Activated CD4-positive, alpha-beta T cell treated with anti-CD3 and anti-CD28 coated beads for 36 hours (primary cell): ENCODE measurements at regions of chr17 and their contacts with region 1.

Region 1: DNA sequence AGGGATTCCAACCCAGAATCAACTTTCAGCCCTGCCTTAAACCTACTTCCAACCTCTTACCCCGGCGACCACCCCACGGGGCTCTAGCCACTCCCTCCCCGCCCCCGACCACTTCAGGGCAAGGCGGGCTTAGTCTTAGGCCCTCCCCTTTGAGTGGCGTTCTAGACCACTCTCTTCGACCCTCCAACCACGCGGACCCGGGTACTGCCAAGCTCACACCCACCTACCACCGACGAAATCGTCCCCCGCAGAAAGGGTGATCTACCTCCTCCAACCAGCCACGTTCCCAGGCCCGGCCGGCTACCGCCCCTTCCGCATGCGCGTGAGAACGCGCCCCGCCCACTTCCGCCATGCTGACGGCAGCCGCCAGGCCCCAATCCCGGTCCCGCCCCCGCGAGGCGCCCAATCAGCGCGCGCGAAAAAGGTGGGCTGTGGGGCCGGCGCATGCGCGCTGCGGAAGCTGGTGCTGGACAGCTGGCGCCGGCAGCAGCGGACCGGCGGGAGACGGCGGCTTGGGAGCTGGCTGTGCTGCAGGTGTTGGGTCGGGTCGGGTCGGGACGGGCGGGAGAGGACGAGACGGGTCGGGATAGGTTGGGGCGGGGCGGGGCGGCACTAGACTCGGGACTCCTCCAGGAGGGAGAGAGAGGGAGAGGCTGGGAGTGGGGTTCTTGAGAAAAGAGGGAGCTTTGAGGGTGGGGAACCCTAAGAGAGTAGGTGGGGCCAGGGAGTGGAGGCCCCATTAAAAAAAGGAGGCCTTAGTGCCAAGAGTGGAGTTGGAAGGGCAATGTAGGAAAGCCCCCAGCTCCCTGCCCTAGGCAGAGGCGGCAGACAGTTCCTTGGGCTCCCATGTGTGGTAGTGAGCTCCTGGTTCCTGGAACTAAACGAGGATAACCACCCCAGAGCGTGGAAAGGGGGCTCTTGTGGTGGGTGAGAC is at the start of gene NAT9:
- DNase-seq: peak; percentile 100
- ATAC-seq: peak; percentile 76
- H3K4me3 Mint-ChIP-seq: peak within 1 kb of the TSS; percentile 98
- H3K27ac Mint-ChIP-seq: peak within 1 kb of the TSS; percentile 94
- H3K4me1 Mint-ChIP-seq: peaks cover 59% of the 10 kb centered on the region
- H3K27me3 Mint-ChIP-seq: no peaks in the 10 kb centered on the region
- total RNA-seq, gene NAT9: 23.7 to 39.6 TPM

Region 2: DNA sequence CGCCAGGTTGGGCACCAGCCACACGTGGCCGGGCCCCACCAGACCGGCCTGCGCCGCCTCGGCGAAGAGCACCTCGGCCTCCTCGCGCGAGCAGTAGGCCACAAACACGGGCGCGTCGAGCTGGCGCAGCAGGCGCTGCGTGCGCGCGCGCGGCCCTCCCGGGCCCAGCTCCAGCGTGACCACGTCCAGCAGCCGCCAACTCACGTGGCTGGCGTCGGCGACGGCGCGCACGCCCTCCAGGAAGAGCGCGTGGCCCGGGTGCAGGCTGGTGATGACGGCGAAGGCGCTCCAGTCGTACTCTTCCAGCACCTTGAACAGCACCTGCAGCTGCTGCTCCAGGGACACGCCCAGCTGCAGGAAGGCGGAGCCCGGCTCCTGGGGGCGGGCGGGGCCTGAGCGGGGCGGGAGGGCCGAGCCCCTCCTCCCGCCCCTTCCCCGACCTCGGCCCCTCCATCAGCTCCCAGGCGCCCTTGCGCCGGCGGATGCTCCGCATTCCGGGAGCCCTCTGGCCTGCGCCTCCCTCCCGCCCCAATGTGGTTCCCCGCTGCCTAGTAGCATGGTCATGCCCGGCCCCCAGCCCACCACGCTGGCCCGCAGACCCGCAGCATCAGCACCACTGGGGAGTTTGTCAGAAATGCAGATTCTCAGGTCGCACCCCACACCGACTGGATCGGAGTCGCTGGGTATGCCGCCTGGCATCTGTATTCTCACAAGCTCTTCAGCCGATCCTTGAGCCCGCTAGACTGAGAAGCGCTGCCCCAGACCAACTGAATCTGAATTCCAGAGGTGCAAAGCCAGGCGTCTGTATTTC is 76.1 kb after region 1 on chr17:
- CTCF ChIA-PET with region 1: interaction called, 4 read pairs
- POLR2A ChIA-PET with region 1: no interaction called
- intact Hi-C with region 1: loop called in 1 of 2 experiments (anchors 1 kb)
- DNase-seq: peak; percentile 83
- ATAC-seq: peak; percentile 91
- H3K4me3 Mint-ChIP-seq: peak overlapping the region; percentile 70
- H3K27ac Mint-ChIP-seq: peak overlapping the region; percentile 35
- H3K4me1 Mint-ChIP-seq: peaks cover 9% of the 10 kb centered on the region
- H3K27me3 Mint-ChIP-seq: peaks cover 27% of the 10 kb centered on the region

Region 3: GRCh38 chr17:74904687-74905409 is 128.5 kb after region 1 on chr17:
- CTCF ChIA-PET with region 1: no interaction called
- POLR2A ChIA-PET with region 1: no interaction called
- intact Hi-C with region 1: no loop called
- DNase-seq: peak; percentile 45
- ATAC-seq: peak; percentile 80
- H3K4me3 Mint-ChIP-seq: no peak overlapping the region
- H3K27ac Mint-ChIP-seq: no peak overlapping the region
- H3K4me1 Mint-ChIP-seq: peaks cover 5% of the 10 kb centered on the region
- H3K27me3 Mint-ChIP-seq: peaks cover 9% of the 10 kb centered on the region